H1 (cell line): ENCODE measurements at regions of chr11 and their contacts with region 1.

Region 1: GRCh38 chr11:33362051-33362910 is 105.1 kb downstream of the HIPK3 start:
- DNase-seq: no peak
- H3K4me3 ChIP-seq: no peak overlapping the region
- H3K27ac ChIP-seq: no peak overlapping the region
- H3K4me1 ChIP-seq: no peaks in the 10 kb centered on the region
- H3K27me3 ChIP-seq: peaks cover 0 to 1% (median 0%) of the 10 kb centered on the region in 4 experiments; a peak in 1 of 7 replicates
- CTCF ChIP-seq: peak in 2 of 3 experiments; percentile 19 to 39; a peak in 2 of 4 replicates
- EP300 ChIP-seq: no peak
- POLR2A ChIP-seq: no peak
- RAD21 ChIP-seq: peak; percentile 56 to 57

Region 2: GRCh38 chr11:33125611-33126010 is 236.7 kb before region 1 on chr11:
- CTCF ChIA-PET with region 1: no interaction called
- POLR2A ChIA-PET with region 1: no interaction called
- DNase-seq: no peak
- H3K4me3 ChIP-seq: no peak overlapping the region
- H3K27ac ChIP-seq: 0 out of 2 replicates have a peak overlapping the region, but pooled peaks have one; percentile 1
- H3K4me1 ChIP-seq: peaks cover 0 to 6% (median 0%) of the 10 kb centered on the region in 4 experiments; a peak in 3 of 7 replicates
- H3K27me3 ChIP-seq: no peaks in the 10 kb centered on the region
- CTCF ChIP-seq: no peak
- EP300 ChIP-seq: no peak
- POLR2A ChIP-seq: no peak
- RAD21 ChIP-seq: no peak

Region 3: DNA sequence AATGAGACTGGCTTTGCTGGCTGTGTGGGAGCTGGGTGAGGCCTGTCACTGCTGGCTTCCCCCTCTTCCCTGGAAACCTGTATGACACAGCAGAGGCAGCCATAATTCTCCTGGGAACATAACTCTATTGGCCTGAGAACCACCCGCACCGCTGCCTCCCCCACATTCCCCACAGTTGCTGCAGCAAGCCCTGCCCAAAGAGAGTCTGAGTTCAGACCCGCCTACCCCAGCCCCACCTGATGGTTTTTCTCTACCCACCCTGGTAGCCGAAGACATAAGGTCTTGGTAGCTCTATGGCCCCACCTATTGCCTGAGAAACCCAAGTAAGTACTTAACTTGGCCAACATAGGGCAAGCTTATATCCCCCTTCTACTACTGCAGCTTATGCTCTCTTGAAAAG is 163.5 kb after region 1 on chr11:
- CTCF ChIA-PET with region 1: interaction called, 10 read pairs
- POLR2A ChIA-PET with region 1: no interaction called
- DNase-seq: peak; percentile 3 to 48
- H3K4me3 ChIP-seq: no peak overlapping the region
- H3K27ac ChIP-seq: no peak overlapping the region
- H3K4me1 ChIP-seq: peaks cover 0 to 4% (median 2%) of the 10 kb centered on the region in 4 experiments; a peak in 2 of 7 replicates
- H3K27me3 ChIP-seq: no peaks in the 10 kb centered on the region
- CTCF ChIP-seq: peak in 2 of 3 experiments; percentile 24 to 31; a peak in 3 of 4 replicates
- EP300 ChIP-seq: no peak
- POLR2A ChIP-seq: no peak
- RAD21 ChIP-seq: peak; percentile 49 to 66

Region 4: GRCh38 chr11:33687733-33688479 is 325.6 kb after region 1 on chr11:
- CTCF ChIA-PET with region 1: interaction called, 98 read pairs
- POLR2A ChIA-PET with region 1: no interaction called
- DNase-seq: peak in 1 of 2 experiments; percentile 72
- H3K4me3 ChIP-seq: no peak overlapping the region
- H3K27ac ChIP-seq: no peak overlapping the region
- H3K4me1 ChIP-seq: peaks cover 2 to 20% (median 10%) of the 10 kb centered on the region in 4 experiments
- H3K27me3 ChIP-seq: no peaks in the 10 kb centered on the region
- CTCF ChIP-seq: peak in 2 of 3 experiments; percentile 80; a peak in 3 of 4 replicates
- EP300 ChIP-seq: no peak
- POLR2A ChIP-seq: no peak
- RAD21 ChIP-seq: peak; percentile 99